ENCODE measurements at regions of chr2 and their contacts with region 1.

Region 1: GRCh38 chr2:20962939-20963557 is 80.8 kb downstream of the APOB start:
- DNase-seq: peak in 4 of 5 donors; percentile 46 to 59 (median 58)
- ATAC-seq: peak in 3 of 4 donors; percentile 66 to 72 (median 70)
- H3K4me3 ChIP-seq: no peak overlapping the region
- H3K27ac ChIP-seq: no peak overlapping the region
- H3K4me1 ChIP-seq: no peaks in the 10 kb centered on the region
- H3K27me3 ChIP-seq: peaks cover 0 to 44% (median 6%) of the 10 kb centered on the region in 9 donors
- CTCF ChIP-seq: peak; percentile 79 to 93 (median 85)
- POLR2A ChIP-seq: no peak

Region 2: GRCh38 chr2:20391951-20392699 is 570.9 kb before region 1 on chr2:
- intact Hi-C with region 1: loop called in 1 of 10 experiments (anchors 10 kb)
- DNase-seq: no peak
- ATAC-seq: no peak
- H3K4me3 ChIP-seq: no peak overlapping the region
- H3K27ac ChIP-seq: no peak overlapping the region
- H3K4me1 ChIP-seq: no peaks in the 10 kb centered on the region
- H3K27me3 ChIP-seq: peaks cover 0 to 3% (median 0%) of the 10 kb centered on the region in 9 donors
- CTCF ChIP-seq: no peak
- POLR2A ChIP-seq: no peak

Region 3: GRCh38 chr2:20682167-20682920 is 280.7 kb before region 1 on chr2:
- intact Hi-C with region 1: loop called in 3 of 10 experiments (anchors 5 kb)
- DNase-seq: no peak
- ATAC-seq: no peak
- H3K4me3 ChIP-seq: no peak overlapping the region
- H3K27ac ChIP-seq: no peak overlapping the region
- H3K4me1 ChIP-seq: peaks cover 0 to 6% (median 0%) of the 10 kb centered on the region in 12 donors
- H3K27me3 ChIP-seq: no peaks in the 10 kb centered on the region
- CTCF ChIP-seq: peak; percentile 10 to 53 (median 31)
- POLR2A ChIP-seq: no peak

Region 4: GRCh38 chr2:20781656-20782265 is 181.3 kb before region 1 on chr2:
- intact Hi-C with region 1: loop called in 9 of 10 experiments (anchors 1 to 10 kb)
- DNase-seq: no peak
- ATAC-seq: no peak
- H3K4me3 ChIP-seq: no peak overlapping the region
- H3K27ac ChIP-seq: no peak overlapping the region
- H3K4me1 ChIP-seq: no peaks in the 10 kb centered on the region
- H3K27me3 ChIP-seq: no peaks in the 10 kb centered on the region
- CTCF ChIP-seq: peak; percentile 26 to 58 (median 44)
- POLR2A ChIP-seq: no peak

Region 5: GRCh38 chr2:20999906-21000645 is 37.0 kb after region 1 on chr2:
- intact Hi-C with region 1: no loop called
- DNase-seq: no peak
- ATAC-seq: no peak
- H3K4me3 ChIP-seq: no peak overlapping the region
- H3K27ac ChIP-seq: no peak overlapping the region
- H3K4me1 ChIP-seq: no peaks in the 10 kb centered on the region
- H3K27me3 ChIP-seq: no peaks in the 10 kb centered on the region
- CTCF ChIP-seq: no peak
- POLR2A ChIP-seq: no peak